ENCODE measurements at regions of chr19 and their contacts with region 1.

Region 1: GRCh38 chr19:40348125-40348913 is at the starts of genes C19orf47 and PLD3:
- DNase-seq: peak; percentile 94
- ATAC-seq: peak; percentile 94
- H3K4me3 Mint-ChIP-seq: peak within 1 kb of the TSS; percentile 90
- H3K27ac Mint-ChIP-seq: peak within 1 kb of the TSS; percentile 85
- H3K4me1 Mint-ChIP-seq: peaks cover 28% of the 10 kb centered on the region
- H3K27me3 Mint-ChIP-seq: no peaks in the 10 kb centered on the region
- CTCF ChIP-seq: no peak
- total RNA-seq, gene C19orf47: 14.6 and 14.7 TPM in 2 replicates
- total RNA-seq, gene PLD3: 37.0 and 37.8 TPM in 2 replicates

Region 2: GRCh38 chr19:39824143-39825092 is 523.9 kb before region 1 on chr19:
- CTCF ChIA-PET with region 1: no interaction called
- POLR2A ChIA-PET with region 1: no interaction called
- intact Hi-C with region 1: loop called (anchors 1 kb)
- DNase-seq: peak; percentile 67
- ATAC-seq: peak; percentile 98
- H3K4me3 Mint-ChIP-seq: no peak overlapping the region
- H3K27ac Mint-ChIP-seq: no peak overlapping the region
- H3K4me1 Mint-ChIP-seq: peaks cover 12% of the 10 kb centered on the region
- H3K27me3 Mint-ChIP-seq: no peaks in the 10 kb centered on the region
- CTCF ChIP-seq: no peak

Region 3: DNA sequence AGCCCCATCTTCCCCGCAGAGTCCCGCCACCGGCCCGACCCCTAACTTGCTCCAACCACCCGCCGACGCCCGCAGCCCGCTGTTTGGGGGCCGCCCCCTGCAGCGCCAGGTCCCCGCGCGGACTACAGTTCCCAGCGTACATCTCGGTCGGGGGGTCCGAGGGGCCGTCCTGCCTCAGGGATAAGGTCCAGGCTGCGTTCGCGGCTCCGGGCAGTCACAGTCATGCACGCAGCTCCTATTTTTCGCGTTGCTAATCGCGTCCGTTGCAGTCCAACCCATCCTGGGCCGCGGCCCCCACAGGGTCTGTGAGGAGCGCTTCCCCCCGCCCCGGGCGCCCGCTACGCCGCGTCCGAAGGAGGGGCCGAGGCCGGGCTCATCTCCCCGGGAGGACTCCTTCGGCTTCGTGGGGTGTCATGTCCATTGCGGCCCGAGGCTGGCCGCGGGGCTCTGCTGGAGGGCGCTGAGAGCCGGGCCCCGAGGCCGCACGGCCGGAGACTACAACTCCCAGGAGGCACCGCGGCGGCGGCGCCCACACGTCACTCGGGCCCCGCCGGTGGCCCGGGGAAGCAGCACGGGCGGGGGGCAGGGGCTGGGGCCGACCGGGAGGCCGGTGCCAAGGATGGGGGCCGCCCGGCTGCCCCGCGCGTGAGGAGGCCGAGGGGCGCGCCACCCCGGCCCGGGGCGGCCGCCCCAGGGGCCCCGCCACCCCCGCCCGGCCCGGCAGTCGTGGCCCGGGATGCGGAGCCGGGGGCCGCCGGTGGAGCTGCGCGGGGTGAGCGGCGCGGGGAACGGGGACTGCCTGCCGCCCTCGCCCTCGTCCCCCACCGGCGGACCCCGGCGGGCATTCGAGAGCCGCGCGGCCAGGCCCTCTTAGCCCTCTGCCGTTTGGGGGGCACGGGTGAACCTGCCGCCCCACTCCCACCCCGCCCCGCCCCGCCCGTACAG is 157.2 kb before region 1 on chr19 and contains the start of gene MAP3K10:
- CTCF ChIA-PET with region 1: no interaction called
- POLR2A ChIA-PET with region 1: interaction called, 3 read pairs
- intact Hi-C with region 1: loop called (anchors 1 kb)
- DNase-seq: peak; percentile 83
- ATAC-seq: peak; percentile 89
- H3K4me3 Mint-ChIP-seq: peak within 1 kb of the TSS; percentile 90
- H3K27ac Mint-ChIP-seq: peak within 1 kb of the TSS; percentile 86
- H3K4me1 Mint-ChIP-seq: peaks cover 31% of the 10 kb centered on the region
- H3K27me3 Mint-ChIP-seq: no peaks in the 10 kb centered on the region
- CTCF ChIP-seq: no peak
- total RNA-seq, gene MAP3K10: 16.4 and 20.5 TPM in 2 replicates

Region 4: GRCh38 chr19:40383668-40384248 is 35.4 kb after region 1 on chr19:
- CTCF ChIA-PET with region 1: no interaction called
- POLR2A ChIA-PET with region 1: no interaction called
- intact Hi-C with region 1: no loop called
- DNase-seq: no peak
- ATAC-seq: no peak
- H3K4me3 Mint-ChIP-seq: no peak overlapping the region
- H3K27ac Mint-ChIP-seq: no peak overlapping the region
- H3K4me1 Mint-ChIP-seq: no peaks in the 10 kb centered on the region
- H3K27me3 Mint-ChIP-seq: no peaks in the 10 kb centered on the region
- CTCF ChIP-seq: no peak

Region 5: GRCh38 chr19:40403262-40403984 is 55.1 kb after region 1 on chr19:
- CTCF ChIA-PET with region 1: no interaction called
- POLR2A ChIA-PET with region 1: interaction called, 10 read pairs
- intact Hi-C with region 1: loop called (anchors 1 kb)
- DNase-seq: peak; percentile 86
- ATAC-seq: peak; percentile 81
- H3K4me3 Mint-ChIP-seq: peak overlapping the region; percentile 90
- H3K27ac Mint-ChIP-seq: peak overlapping the region; percentile 71
- H3K4me1 Mint-ChIP-seq: peaks cover 23% of the 10 kb centered on the region
- H3K27me3 Mint-ChIP-seq: peaks cover 3% of the 10 kb centered on the region
- CTCF ChIP-seq: no peak

Region 6: GRCh38 chr19:40465557-40466150 is 117.3 kb after region 1 on chr19 and contains the start of gene BLVRB:
- CTCF ChIA-PET with region 1: no interaction called
- POLR2A ChIA-PET with region 1: interaction called, 9 read pairs
- intact Hi-C with region 1: loop called (anchors 2 kb)
- DNase-seq: peak; percentile 99
- ATAC-seq: peak; percentile 89
- H3K4me3 Mint-ChIP-seq: peak within 1 kb of the TSS; percentile 81
- H3K27ac Mint-ChIP-seq: peak within 1 kb of the TSS; percentile 68
- H3K4me1 Mint-ChIP-seq: peaks cover 36% of the 10 kb centered on the region
- H3K27me3 Mint-ChIP-seq: peaks cover 14% of the 10 kb centered on the region
- CTCF ChIP-seq: no peak
- total RNA-seq, gene BLVRB: 12.3 and 14.6 TPM in 2 replicates

Region 7: GRCh38 chr19:40609561-40610395 is 261.5 kb after region 1 on chr19:
- CTCF ChIA-PET with region 1: no interaction called
- POLR2A ChIA-PET with region 1: interaction called, 5 read pairs
- intact Hi-C with region 1: loop called (anchors 5 kb)
- DNase-seq: peak; percentile 92
- ATAC-seq: peak; percentile 54
- H3K4me3 Mint-ChIP-seq: peak overlapping the region; percentile 88
- H3K27ac Mint-ChIP-seq: peak overlapping the region; percentile 94
- H3K4me1 Mint-ChIP-seq: peaks cover 60% of the 10 kb centered on the region
- H3K27me3 Mint-ChIP-seq: no peaks in the 10 kb centered on the region
- CTCF ChIP-seq: no peak

Measured in activated B cell treated with CpG ODN at 0.5 μM for 24 hours (primary cell).